Lower lobe of right lung (tissue), 2 donors: ENCODE measurements at regions of chr21 and their contacts with region 1.

Region 1: GRCh38 chr21:25708467-25709065 is 26.1 kb downstream of the ATP5PF start:
- DNase-seq: no peak
- ATAC-seq: no peak
- H3K4me3 ChIP-seq: no peak overlapping the region
- H3K27ac ChIP-seq: no peak overlapping the region
- H3K4me1 ChIP-seq: no peaks in the 10 kb centered on the region
- H3K27me3 ChIP-seq: no peaks in the 10 kb centered on the region
- CTCF ChIP-seq: peak; percentile 81

Region 2: DNA sequence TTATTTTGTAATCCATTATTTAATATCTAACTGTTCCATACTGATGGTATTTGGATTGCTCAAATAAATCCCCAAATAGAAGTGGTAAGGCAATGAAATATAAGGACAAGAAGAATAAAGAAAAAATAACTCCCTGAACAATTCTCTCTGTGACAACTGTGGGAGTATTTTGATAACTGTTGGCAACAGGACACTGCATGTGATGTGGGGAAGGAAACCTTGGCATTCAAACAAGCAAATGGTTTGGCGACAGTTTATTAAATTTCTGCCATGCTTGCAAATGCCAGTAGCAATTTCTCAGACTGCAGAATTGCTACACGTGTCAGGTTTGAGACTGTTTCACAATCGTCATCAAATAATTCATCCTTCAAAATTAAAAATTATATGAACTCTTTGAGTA is 92.7 kb before region 1 on chr21:
- intact Hi-C with region 1: loop called (anchors 10 kb)
- DNase-seq: no peak
- ATAC-seq: no peak
- H3K4me3 ChIP-seq: no peak overlapping the region
- H3K27ac ChIP-seq: no peak overlapping the region
- H3K4me1 ChIP-seq: no peaks in the 10 kb centered on the region
- H3K27me3 ChIP-seq: no peaks in the 10 kb centered on the region
- CTCF ChIP-seq: no peak